ENCODE measurements at regions of chr16 and their contacts with region 1.

Region 1: GRCh38 chr16:73122604-73123391 is 74.9 kb upstream of the ZFHX3 start:
- DNase-seq: no peak

Region 2: GRCh38 chr16:73031155-73031866 is 91.5 kb before region 1 on chr16:
- intact Hi-C with region 1: no loop called
- DNase-seq: no peak

Region 3: GRCh38 chr16:73145166-73145880 is 22.5 kb after region 1 on chr16:
- intact Hi-C with region 1: loop called in 1 of 2 experiments (anchors 1 kb)
- DNase-seq: no peak